ENCODE measurements at regions of chr1 and their contacts with region 1.

Region 1: GRCh38 chr1:119662034-119662437 is 14.0 kb upstream of the ZNF697 start:
- DNase-seq: peak; percentile 52
- ATAC-seq: peak; percentile 76
- H3K4me3 ChIP-seq: peak overlapping the region; percentile 15; the same call in 1 of the 2 replicates
- H3K27ac ChIP-seq: peak overlapping the region; percentile 61
- H3K4me1 ChIP-seq: peaks cover 23% of the 10 kb centered on the region
- H3K27me3 ChIP-seq: no peaks in the 10 kb centered on the region; a peak in 1 of 4 replicates
- CTCF ChIP-seq: no peak
- EP300 ChIP-seq: peak; percentile 65 to 94
- POLR2A ChIP-seq: no peak
- RAD21 ChIP-seq: no peak

Region 2: DNA sequence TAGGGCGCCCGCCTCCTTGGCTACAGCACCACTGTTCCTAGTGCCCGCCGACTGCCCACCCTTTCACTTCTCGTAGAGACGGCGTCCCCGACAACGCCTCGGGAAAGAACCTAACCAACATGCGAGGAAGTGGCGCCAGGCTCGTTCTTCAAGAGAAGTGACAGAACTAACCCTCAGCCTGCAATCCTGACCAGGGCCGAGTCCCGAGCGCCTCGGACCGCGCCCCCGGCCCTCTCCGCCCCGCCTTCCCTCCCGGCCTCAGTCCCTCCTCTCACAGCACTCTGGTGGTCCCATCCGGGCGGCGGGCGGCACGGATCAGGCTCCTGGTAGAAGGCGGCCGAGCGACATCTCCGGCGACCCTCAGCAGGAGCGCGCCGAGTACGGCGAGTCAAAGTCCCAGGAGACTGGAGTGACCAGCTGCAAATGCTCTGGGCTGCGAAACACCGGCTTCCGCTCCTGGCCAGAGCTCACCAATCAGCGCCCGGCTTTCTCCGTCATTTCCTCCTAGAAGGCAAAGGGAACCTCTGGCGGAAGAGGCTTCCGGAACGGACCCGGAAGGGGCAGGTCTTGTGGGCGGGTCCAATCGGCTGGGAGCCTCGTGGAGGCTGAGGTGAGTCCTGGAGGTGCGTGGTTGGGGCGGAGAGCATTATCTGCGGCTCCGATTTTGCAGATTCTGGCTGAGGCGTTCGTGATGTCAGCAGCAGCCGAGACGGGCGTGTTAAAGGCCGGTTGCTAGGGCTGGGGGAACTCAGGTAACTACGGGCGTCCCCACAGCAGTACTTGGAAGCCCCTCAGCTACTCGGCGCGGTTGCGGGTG is 1732.7 kb before region 1 on chr1 and contains the starts of genes GDAP2 and WDR3:
- CTCF ChIA-PET with region 1: no interaction called
- POLR2A ChIA-PET with region 1: no interaction called
- RAD21 ChIA-PET with region 1: no interaction called
- SMC1A ChIA-PET with region 1: no interaction called
- in situ Hi-C with region 1: no loop called
- intact Hi-C with region 1: loop called (anchors 5 kb)
- DNase-seq: peak; percentile 79
- ATAC-seq: peak; percentile 92
- H3K4me3 ChIP-seq: peak within 1 kb of the TSS; percentile 84
- H3K27ac ChIP-seq: peak within 1 kb of the TSS; percentile 61
- H3K4me1 ChIP-seq: 0 out of 2 replicates have a peak, but pooled peaks cover 2% of the 10 kb centered on the region
- H3K27me3 ChIP-seq: no peaks in the 10 kb centered on the region
- CTCF ChIP-seq: no peak
- EP300 ChIP-seq: no peak
- POLR2A ChIP-seq: peak; percentile 83
- RAD21 ChIP-seq: no peak
- polyA plus RNA-seq, gene GDAP2: 2.6 to 4.0 TPM
- polyA plus RNA-seq, gene WDR3: 26.1 to 38.9 TPM

Region 3: GRCh38 chr1:119621705-119622104 is 40.3 kb before region 1 on chr1:
- CTCF ChIA-PET with region 1: interaction called, 446 read pairs
- POLR2A ChIA-PET with region 1: interaction called, 3 read pairs
- RAD21 ChIA-PET with region 1: interaction called, 69 read pairs
- SMC1A ChIA-PET with region 1: interaction called, 124 read pairs
- in situ Hi-C with region 1: loop called (anchors 5 kb)
- intact Hi-C with region 1: no loop called
- DNase-seq: no peak
- ATAC-seq: no peak
- H3K4me3 ChIP-seq: no peak overlapping the region
- H3K27ac ChIP-seq: no peak overlapping the region
- H3K4me1 ChIP-seq: no peaks in the 10 kb centered on the region
- H3K27me3 ChIP-seq: no peaks in the 10 kb centered on the region
- CTCF ChIP-seq: no peak
- EP300 ChIP-seq: no peak
- POLR2A ChIP-seq: no peak
- RAD21 ChIP-seq: no peak

Region 4: GRCh38 chr1:119631433-119632102 is 30.5 kb before region 1 on chr1:
- CTCF ChIA-PET with region 1: interaction called, 10 read pairs
- POLR2A ChIA-PET with region 1: no interaction called
- RAD21 ChIA-PET with region 1: interaction called, 6 read pairs
- SMC1A ChIA-PET with region 1: interaction called, 6 read pairs
- in situ Hi-C with region 1: loop called (anchors 5 kb)
- intact Hi-C with region 1: no loop called
- DNase-seq: no peak
- ATAC-seq: no peak; the same call in none of the 3 replicates
- H3K4me3 ChIP-seq: no peak overlapping the region
- H3K27ac ChIP-seq: no peak overlapping the region
- H3K4me1 ChIP-seq: peaks cover 18% of the 10 kb centered on the region
- H3K27me3 ChIP-seq: no peaks in the 10 kb centered on the region
- CTCF ChIP-seq: no peak
- EP300 ChIP-seq: no peak
- POLR2A ChIP-seq: no peak
- RAD21 ChIP-seq: no peak

Region 5: DNA sequence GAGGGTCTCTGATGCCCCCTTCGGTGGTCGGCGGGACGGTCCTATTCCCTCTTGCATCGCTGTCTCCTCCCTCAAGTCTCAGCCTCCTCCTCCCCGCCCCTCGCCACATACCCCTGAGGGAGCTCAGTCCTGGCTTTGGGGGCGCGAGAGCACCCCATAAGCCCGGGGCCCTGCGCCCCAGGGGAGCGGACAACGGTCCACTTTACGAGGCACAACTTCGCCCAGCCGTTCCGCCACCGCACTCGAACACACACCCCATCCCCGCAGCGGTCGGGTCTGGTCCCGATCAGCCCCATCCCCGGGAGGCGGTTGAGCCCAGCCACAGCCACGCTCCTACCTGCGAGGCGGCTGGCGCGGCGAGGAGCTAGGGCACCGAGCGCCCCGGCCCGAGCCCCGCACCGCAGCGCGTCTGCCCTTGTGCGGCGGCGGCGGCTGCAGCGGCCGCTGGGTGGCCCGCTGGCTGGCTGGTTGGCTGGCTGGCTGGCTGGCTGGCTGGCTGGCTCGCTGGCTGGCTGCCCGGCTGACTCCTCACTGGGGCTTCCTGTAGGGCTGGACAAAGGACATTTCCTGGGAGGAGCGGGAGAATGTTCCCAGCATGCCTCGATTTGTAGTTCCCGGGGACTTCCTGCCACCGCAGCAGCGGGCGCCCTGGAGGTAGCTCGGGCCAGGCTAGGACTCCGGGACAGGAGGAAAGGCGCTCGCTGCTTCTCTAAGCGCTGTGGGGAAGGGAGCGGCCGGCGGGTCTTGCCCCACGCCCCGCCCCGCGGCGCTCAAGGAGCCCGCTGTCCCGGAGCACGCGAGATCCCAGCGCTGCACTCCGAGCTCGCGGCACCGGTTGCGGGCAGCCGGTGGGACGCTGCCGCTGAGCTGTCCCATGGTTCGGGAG is 14.1 kb before region 1 on chr1 and contains the start of gene ZNF697:
- CTCF ChIA-PET with region 1: interaction called, 87 read pairs
- POLR2A ChIA-PET with region 1: interaction called, 13 read pairs
- RAD21 ChIA-PET with region 1: interaction called, 74 read pairs
- SMC1A ChIA-PET with region 1: interaction called, 163 read pairs
- in situ Hi-C with region 1: no loop called
- intact Hi-C with region 1: loop called (anchors 2 kb)
- DNase-seq: peak; percentile 51
- ATAC-seq: peak; percentile 84
- H3K4me3 ChIP-seq: peak within 1 kb of the TSS; percentile 90
- H3K27ac ChIP-seq: no peak within 1 kb of the TSS; the same call in 1 of the 2 replicates
- H3K4me1 ChIP-seq: no peaks in the 10 kb centered on the region; the same call in 1 of the 2 replicates
- H3K27me3 ChIP-seq: no peaks in the 10 kb centered on the region
- CTCF ChIP-seq: peak in 2 of 3 experiments; percentile 7 to 17; a peak in 1 of 6 replicates
- EP300 ChIP-seq: no peak
- POLR2A ChIP-seq: peak; percentile 61; the same call in 1 of the 2 replicates
- RAD21 ChIP-seq: no peak
- polyA plus RNA-seq, gene ZNF697: 0.74 to 0.99 TPM